Body of pancreas (tissue), 4 donors: ENCODE measurements at regions of chr11 and their contacts with region 1.

Region 1: GRCh38 chr11:47378010-47378835 is at the start of gene SPI1:
- DNase-seq: peak in 2 of 4 donors; percentile 27 to 76
- ATAC-seq: no peak
- H3K4me3 ChIP-seq: no peak within 1 kb of the TSS
- H3K27ac ChIP-seq: peak within 1 kb of the TSS in 2 of 4 donors; percentile 12 to 57
- H3K4me1 ChIP-seq: no peaks in the 10 kb centered on the region
- H3K27me3 ChIP-seq: no peaks in the 10 kb centered on the region
- CTCF ChIP-seq: no peak
- POLR2A ChIP-seq: peak in 1 of 3 donors; percentile 41
- total RNA-seq, gene SPI1: 7.5 to 10.9 TPM

Region 2: GRCh38 chr11:47248664-47249377 is 129.4 kb before region 1 on chr11 and contains the start of gene ACP2:
- intact Hi-C with region 1: no loop called
- DNase-seq: peak; percentile 89 to 94 (median 92)
- ATAC-seq: peak; percentile 98
- H3K4me3 ChIP-seq: peak within 1 kb of the TSS; percentile 87
- H3K27ac ChIP-seq: peak within 1 kb of the TSS; percentile 74 to 87 (median 81)
- H3K4me1 ChIP-seq: peaks cover 34% of the 10 kb centered on the region
- H3K27me3 ChIP-seq: no peaks in the 10 kb centered on the region
- CTCF ChIP-seq: peak in 4 of 7 experiments; percentile 28 to 42 (median 38)
- POLR2A ChIP-seq: peak; percentile 51 to 89 (median 82)
- total RNA-seq, gene ACP2: 31.6 to 43.1 TPM

Region 3: GRCh38 chr11:47454180-47454644 is 76.0 kb after region 1 on chr11:
- intact Hi-C with region 1: loop called (anchors 5 kb)
- DNase-seq: peak; percentile 78 to 89 (median 84)
- ATAC-seq: peak; percentile 92
- H3K4me3 ChIP-seq: no peak overlapping the region
- H3K27ac ChIP-seq: no peak overlapping the region
- H3K4me1 ChIP-seq: peaks cover 5% of the 10 kb centered on the region
- H3K27me3 ChIP-seq: no peaks in the 10 kb centered on the region
- CTCF ChIP-seq: peak; percentile 52 to 96 (median 77)
- POLR2A ChIP-seq: no peak